Mammary epithelial cell (primary cell): ENCODE measurements at regions of chr14 and their contacts with region 1.

Region 1: GRCh38 chr14:64540208-64541157 is at the start of gene HSPA2:
- DNase-seq: peak; percentile 100
- H3K4me3 ChIP-seq: peak within 1 kb of the TSS; percentile 46 to 59 (median 58)
- H3K27ac ChIP-seq: peak within 1 kb of the TSS; percentile 40
- H3K4me1 ChIP-seq: peaks cover 4% of the 10 kb centered on the region
- H3K27me3 ChIP-seq: peaks cover 10% of the 10 kb centered on the region
- CTCF ChIP-seq: peak; percentile 61 to 89
- total RNA-seq, gene HSPA2: 4.3 to 4.7 TPM

Region 2: DNA sequence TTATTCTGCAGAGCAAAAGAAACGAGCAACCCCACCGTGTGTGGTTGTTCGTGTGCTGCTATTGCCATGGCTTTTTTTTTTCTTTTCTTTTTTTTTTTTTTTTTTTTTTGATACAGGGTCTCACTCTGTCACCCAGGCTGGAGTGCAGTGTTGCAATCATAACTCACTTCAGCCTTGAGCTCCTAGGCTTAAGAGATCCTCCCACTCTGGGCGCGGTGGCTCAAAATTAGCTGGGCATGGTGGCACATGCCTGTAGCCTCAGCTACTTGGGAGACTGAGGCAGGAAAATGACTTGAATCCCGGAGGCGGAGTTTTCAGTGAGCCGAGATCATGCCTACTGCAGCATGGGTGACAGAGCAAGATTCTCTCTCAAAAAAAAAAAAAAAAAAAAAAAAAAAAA is 390.6 kb before region 1 on chr14:
- CTCF ChIA-PET with region 1: no interaction called
- dilution Hi-C with region 1: no loop called
- in situ Hi-C with region 1: no loop called
- intact Hi-C with region 1: no loop called
- DNase-seq: no peak
- H3K4me3 ChIP-seq: no peak overlapping the region
- H3K27ac ChIP-seq: no peak overlapping the region
- H3K4me1 ChIP-seq: no peaks in the 10 kb centered on the region
- H3K27me3 ChIP-seq: no peaks in the 10 kb centered on the region
- CTCF ChIP-seq: no peak

Region 3: GRCh38 chr14:64503478-64504309 is 36.8 kb before region 1 on chr14 and contains the start of gene ZBTB25:
- CTCF ChIA-PET with region 1: interaction called, 3 read pairs
- dilution Hi-C with region 1: no loop called
- in situ Hi-C with region 1: no loop called
- intact Hi-C with region 1: loop called (anchors 1 kb)
- DNase-seq: peak; percentile 89
- H3K4me3 ChIP-seq: peak within 1 kb of the TSS; percentile 78 to 89 (median 84)
- H3K27ac ChIP-seq: peak within 1 kb of the TSS; percentile 93
- H3K4me1 ChIP-seq: peaks cover 40% of the 10 kb centered on the region
- H3K27me3 ChIP-seq: no peaks in the 10 kb centered on the region
- CTCF ChIP-seq: no peak
- total RNA-seq, gene ZBTB25: 9.7 to 10.8 TPM

Region 4: GRCh38 chr14:64636208-64636979 is 95.9 kb after region 1 on chr14:
- CTCF ChIA-PET with region 1: no interaction called
- dilution Hi-C with region 1: loop called (anchors 5 kb)
- in situ Hi-C with region 1: loop called (anchors 10 kb)
- intact Hi-C with region 1: loop called (anchors 1 kb)
- DNase-seq: peak; percentile 29
- H3K4me3 ChIP-seq: no peak overlapping the region
- H3K27ac ChIP-seq: no peak overlapping the region
- H3K4me1 ChIP-seq: peaks cover 16% of the 10 kb centered on the region
- H3K27me3 ChIP-seq: no peaks in the 10 kb centered on the region
- CTCF ChIP-seq: peak; percentile 71 to 81

Region 5: GRCh38 chr14:64641756-64642155 is 101.3 kb after region 1 on chr14:
- CTCF ChIA-PET with region 1: no interaction called
- dilution Hi-C with region 1: loop called (anchors 5 kb)
- in situ Hi-C with region 1: loop called (anchors 10 kb)
- intact Hi-C with region 1: loop called (anchors 1 kb)
- DNase-seq: no peak
- H3K4me3 ChIP-seq: no peak overlapping the region
- H3K27ac ChIP-seq: no peak overlapping the region
- H3K4me1 ChIP-seq: peaks cover 16% of the 10 kb centered on the region
- H3K27me3 ChIP-seq: no peaks in the 10 kb centered on the region
- CTCF ChIP-seq: no peak

Region 6: DNA sequence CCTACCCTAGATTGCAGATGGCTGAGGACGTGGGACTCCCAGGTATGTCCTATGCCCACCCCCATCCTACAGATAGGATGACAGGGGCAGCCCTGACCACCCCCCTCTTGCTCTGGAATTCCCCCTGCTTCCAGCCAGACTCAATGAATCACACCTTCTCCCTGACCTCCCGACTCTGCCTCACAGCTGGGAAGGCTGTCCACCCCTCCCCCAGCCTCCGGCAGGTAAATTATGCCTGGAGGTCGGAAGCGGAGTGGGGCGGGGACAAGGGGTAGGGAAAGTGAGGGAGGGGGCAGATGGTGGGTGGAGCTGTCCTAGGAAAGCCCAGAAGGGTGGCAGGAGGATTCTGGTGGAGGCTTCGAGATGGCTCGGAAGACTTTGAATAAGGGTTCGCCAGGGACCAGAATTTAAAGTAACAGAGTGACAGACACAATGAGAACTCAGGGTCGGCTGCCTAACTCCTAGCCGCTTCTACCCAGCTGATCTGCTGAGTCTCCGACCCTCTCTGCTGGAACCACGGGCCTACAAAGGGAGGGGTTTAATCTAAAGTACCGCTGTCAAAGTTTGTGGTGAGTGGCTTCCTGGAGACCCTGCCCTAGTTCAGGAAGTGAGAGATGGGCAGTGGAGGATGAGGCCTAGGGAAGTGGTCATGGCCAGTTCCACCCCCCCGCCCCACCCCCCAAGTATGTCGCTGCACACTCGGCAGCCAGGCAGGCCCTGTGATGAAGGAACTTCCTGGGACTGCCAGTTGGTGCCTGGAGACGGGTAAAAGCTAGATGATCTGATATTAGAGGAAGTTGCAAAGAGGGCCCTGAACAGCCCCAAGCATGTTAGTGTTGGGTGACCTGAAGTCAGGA is 167.9 kb after region 1 on chr14:
- CTCF ChIA-PET with region 1: no interaction called
- dilution Hi-C with region 1: no loop called
- in situ Hi-C with region 1: no loop called
- intact Hi-C with region 1: loop called (anchors 1 kb)
- DNase-seq: peak; percentile 89
- H3K4me3 ChIP-seq: peak overlapping the region; percentile 23 to 39 (median 31)
- H3K27ac ChIP-seq: peak overlapping the region; percentile 86
- H3K4me1 ChIP-seq: peaks cover 47% of the 10 kb centered on the region
- H3K27me3 ChIP-seq: no peaks in the 10 kb centered on the region
- CTCF ChIP-seq: no peak

Region 7: DNA sequence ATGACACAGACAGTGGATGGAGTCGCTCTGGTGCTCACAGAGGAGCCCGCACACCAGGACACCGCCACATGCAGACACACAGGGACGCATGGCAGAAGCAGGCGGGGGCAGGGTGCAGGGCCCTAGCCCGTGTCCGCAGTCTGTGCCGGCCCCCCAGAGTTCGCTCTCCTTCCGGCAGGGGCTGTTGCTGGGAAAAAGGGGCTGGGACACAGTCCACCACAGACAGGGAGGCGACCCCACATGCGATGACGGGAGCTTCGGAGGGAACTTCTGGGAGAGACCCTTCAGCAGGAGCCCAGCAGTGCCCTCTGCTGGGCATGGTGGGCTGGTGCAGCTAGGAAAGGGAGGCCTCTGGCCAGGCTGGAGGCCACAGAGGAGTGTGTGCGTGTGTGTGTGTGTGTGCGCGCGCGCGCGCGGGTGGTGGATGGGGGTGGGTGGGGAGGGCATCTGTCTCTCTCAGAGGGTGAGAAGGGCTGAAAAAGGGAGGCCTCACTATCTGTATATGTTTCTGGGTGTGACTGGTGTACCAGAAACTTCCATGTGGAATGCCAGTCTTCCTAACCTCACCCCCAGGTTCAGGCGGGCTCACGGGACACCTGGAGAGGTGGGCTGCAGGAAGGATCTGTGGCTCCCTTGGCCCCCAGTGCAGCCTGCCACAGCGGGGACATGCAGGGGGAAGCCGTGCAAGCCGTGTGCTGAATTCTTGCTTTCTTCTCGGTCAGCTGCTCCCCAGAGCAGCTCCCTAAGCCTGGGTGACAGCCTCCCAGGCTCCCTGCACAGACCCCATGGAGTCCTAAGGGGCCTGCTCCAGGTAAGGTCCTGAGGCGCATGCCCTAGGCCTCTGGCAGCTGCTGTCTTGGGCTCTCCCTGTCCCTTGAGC is 224.4 kb after region 1 on chr14:
- CTCF ChIA-PET with region 1: no interaction called
- dilution Hi-C with region 1: no loop called
- in situ Hi-C with region 1: no loop called
- intact Hi-C with region 1: loop called (anchors 1 kb)
- DNase-seq: peak; percentile 61
- H3K4me3 ChIP-seq: no peak overlapping the region
- H3K27ac ChIP-seq: no peak overlapping the region
- H3K4me1 ChIP-seq: peaks cover 45% of the 10 kb centered on the region
- H3K27me3 ChIP-seq: no peaks in the 10 kb centered on the region
- CTCF ChIP-seq: peak; percentile 80 to 92

Region 8: GRCh38 chr14:64899958-64900357 is 359.5 kb after region 1 on chr14:
- CTCF ChIA-PET with region 1: no interaction called
- dilution Hi-C with region 1: no loop called
- in situ Hi-C with region 1: no loop called
- intact Hi-C with region 1: loop called (anchors 5 kb)
- DNase-seq: no peak
- H3K4me3 ChIP-seq: no peak overlapping the region
- H3K27ac ChIP-seq: no peak overlapping the region
- H3K4me1 ChIP-seq: no peaks in the 10 kb centered on the region
- H3K27me3 ChIP-seq: peaks cover 3% of the 10 kb centered on the region
- CTCF ChIP-seq: no peak